Endothelial cell of umbilical vein (primary cell): ENCODE measurements at regions of chr15 and their contacts with region 1.

Region 1: DNA sequence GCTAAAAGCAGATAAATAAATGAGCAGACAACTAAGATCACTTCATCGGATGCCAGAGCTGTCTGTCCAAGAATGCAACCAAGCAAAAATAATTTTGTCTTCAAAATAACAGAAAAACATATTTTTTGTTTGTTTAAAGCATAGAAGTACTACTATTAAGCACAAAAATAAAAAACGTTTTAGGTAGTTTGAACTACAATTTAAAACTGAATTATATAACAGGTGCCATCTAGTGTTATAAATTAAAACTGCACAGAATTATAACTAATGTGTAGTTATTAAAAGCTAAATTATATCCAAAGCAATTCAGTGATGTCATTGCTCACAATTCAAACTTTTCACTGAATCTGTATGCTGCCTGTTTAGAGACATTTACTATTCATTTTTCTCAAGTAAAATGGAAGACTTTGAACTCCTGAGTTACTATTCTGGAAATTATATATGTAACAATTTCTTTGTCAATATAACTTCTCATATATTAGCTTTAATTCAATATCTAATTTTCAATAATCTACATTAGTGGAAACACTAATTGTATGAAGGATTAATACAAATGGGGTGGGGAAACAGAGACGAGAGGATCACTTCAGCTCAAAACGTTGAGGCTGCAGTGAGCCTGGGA is 29.5 kb downstream of the LINS1 start:
- DNase-seq: peak; percentile 16
- H3K4me3 ChIP-seq: no peak overlapping the region
- H3K27ac ChIP-seq: no peak overlapping the region
- H3K4me1 ChIP-seq: no peaks in the 10 kb centered on the region
- H3K27me3 ChIP-seq: no peaks in the 10 kb centered on the region
- CTCF ChIP-seq: peak; percentile 4 to 26
- POLR2A ChIP-seq: no peak

Region 2: GRCh38 chr15:100083572-100083971 is 488.9 kb before region 1 on chr15:
- CTCF ChIA-PET with region 1: no interaction called
- POLR2A ChIA-PET with region 1: no interaction called
- dilution Hi-C with region 1: no loop called
- intact Hi-C with region 1: no loop called
- DNase-seq: no peak
- H3K4me3 ChIP-seq: no peak overlapping the region
- H3K27ac ChIP-seq: no peak overlapping the region
- H3K4me1 ChIP-seq: no peaks in the 10 kb centered on the region
- H3K27me3 ChIP-seq: no peaks in the 10 kb centered on the region
- CTCF ChIP-seq: no peak
- POLR2A ChIP-seq: no peak

Region 3: GRCh38 chr15:100341662-100342560 is 230.6 kb before region 1 on chr15 and contains the start of gene ADAMTS17:
- CTCF ChIA-PET with region 1: interaction called, 16 read pairs
- POLR2A ChIA-PET with region 1: no interaction called
- dilution Hi-C with region 1: no loop called
- intact Hi-C with region 1: loop called (anchors 1 kb)
- DNase-seq: peak; percentile 92
- H3K4me3 ChIP-seq: peak within 1 kb of the TSS; percentile 16 to 36 (median 35)
- H3K27ac ChIP-seq: no peak within 1 kb of the TSS
- H3K4me1 ChIP-seq: peaks cover 4% of the 10 kb centered on the region
- H3K27me3 ChIP-seq: peaks cover 2 to 12% of the 10 kb centered on the region in 2 experiments
- CTCF ChIP-seq: peak; percentile 79 to 91
- POLR2A ChIP-seq: no peak
- total RNA-seq, gene ADAMTS17: not detected in 2 replicates

Region 4: GRCh38 chr15:100602064-100602822 is 29.8 kb after region 1 on chr15 and contains the starts of genes ASB7 and LINS1:
- CTCF ChIA-PET with region 1: interaction called, 14 read pairs
- POLR2A ChIA-PET with region 1: no interaction called
- dilution Hi-C with region 1: no loop called
- intact Hi-C with region 1: no loop called
- DNase-seq: peak; percentile 100
- H3K4me3 ChIP-seq: peak within 1 kb of the TSS; percentile 84 to 99 (median 96)
- H3K27ac ChIP-seq: peak within 1 kb of the TSS; percentile 71
- H3K4me1 ChIP-seq: peaks cover 21% of the 10 kb centered on the region
- H3K27me3 ChIP-seq: no peaks in the 10 kb centered on the region
- CTCF ChIP-seq: no peak
- POLR2A ChIP-seq: no peak
- total RNA-seq, gene ASB7: 13.0 and 13.3 TPM in 2 replicates
- total RNA-seq, gene LINS1: 9.6 and 14.7 TPM in 2 replicates

Region 5: DNA sequence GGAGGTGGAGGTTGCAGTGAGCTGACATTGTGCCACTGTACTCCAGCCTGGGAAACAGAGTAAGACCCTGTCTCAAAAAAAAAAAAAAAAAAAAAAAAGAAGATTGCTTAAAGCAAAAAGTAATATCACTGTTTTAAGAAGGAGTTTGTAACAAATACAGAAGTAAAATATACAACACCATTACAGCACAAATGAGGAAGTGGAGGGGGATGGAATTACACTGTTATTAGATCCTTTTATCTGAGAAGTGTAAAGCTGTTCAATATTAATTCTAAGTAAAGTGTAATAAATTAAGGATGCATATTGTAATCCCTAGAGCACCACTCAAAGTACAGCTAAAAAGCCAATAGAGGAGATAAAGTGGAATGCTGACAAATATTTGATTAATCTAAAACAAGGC is 769.6 kb after region 1 on chr15:
- CTCF ChIA-PET with region 1: no interaction called
- POLR2A ChIA-PET with region 1: no interaction called
- dilution Hi-C with region 1: no loop called
- intact Hi-C with region 1: no loop called
- DNase-seq: no peak
- H3K4me3 ChIP-seq: no peak overlapping the region
- H3K27ac ChIP-seq: no peak overlapping the region
- H3K4me1 ChIP-seq: no peaks in the 10 kb centered on the region
- H3K27me3 ChIP-seq: peaks cover 0 to 2% of the 10 kb centered on the region in 2 experiments
- CTCF ChIP-seq: no peak
- POLR2A ChIP-seq: no peak